WTC11 (cell line): ENCODE measurements at regions of chr12 and their contacts with region 1.

Region 1: GRCh38 chr12:47963340-47964040 is at the start of gene TMEM106C:
- DNase-seq: peak; percentile 95
- ATAC-seq: peak; percentile 93
- H3K4me3 Mint-ChIP-seq: peak within 1 kb of the TSS; percentile 94
- H3K27ac Mint-ChIP-seq: peak within 1 kb of the TSS; percentile 48; the same call in 1 of the 2 replicates
- H3K4me1 Mint-ChIP-seq: peaks cover 45% of the 10 kb centered on the region
- H3K27me3 Mint-ChIP-seq: peaks cover 56% of the 10 kb centered on the region
- CTCF ChIP-seq: peak; percentile 89
- total RNA-seq, gene TMEM106C: 48.3 to 50.8 TPM (median 49.1 TPM) in 3 replicates

Region 2: GRCh38 chr12:47904713-47905310 is 58.7 kb before region 1 on chr12 and contains the start of gene VDR:
- CTCF ChIA-PET with region 1: interaction called, 53 read pairs
- POLR2A ChIA-PET with region 1: interaction called, 8 read pairs
- DNase-seq: peak; percentile 83
- ATAC-seq: peak; percentile 86
- H3K4me3 Mint-ChIP-seq: peak within 1 kb of the TSS; percentile 73
- H3K27ac Mint-ChIP-seq: peak within 1 kb of the TSS; percentile 89
- H3K4me1 Mint-ChIP-seq: peaks cover 14% of the 10 kb centered on the region
- H3K27me3 Mint-ChIP-seq: peaks cover 92% of the 10 kb centered on the region
- CTCF ChIP-seq: no peak
- total RNA-seq, gene VDR: 0.76 to 1.3 TPM (median 0.76 TPM) in 3 replicates

Region 3: DNA sequence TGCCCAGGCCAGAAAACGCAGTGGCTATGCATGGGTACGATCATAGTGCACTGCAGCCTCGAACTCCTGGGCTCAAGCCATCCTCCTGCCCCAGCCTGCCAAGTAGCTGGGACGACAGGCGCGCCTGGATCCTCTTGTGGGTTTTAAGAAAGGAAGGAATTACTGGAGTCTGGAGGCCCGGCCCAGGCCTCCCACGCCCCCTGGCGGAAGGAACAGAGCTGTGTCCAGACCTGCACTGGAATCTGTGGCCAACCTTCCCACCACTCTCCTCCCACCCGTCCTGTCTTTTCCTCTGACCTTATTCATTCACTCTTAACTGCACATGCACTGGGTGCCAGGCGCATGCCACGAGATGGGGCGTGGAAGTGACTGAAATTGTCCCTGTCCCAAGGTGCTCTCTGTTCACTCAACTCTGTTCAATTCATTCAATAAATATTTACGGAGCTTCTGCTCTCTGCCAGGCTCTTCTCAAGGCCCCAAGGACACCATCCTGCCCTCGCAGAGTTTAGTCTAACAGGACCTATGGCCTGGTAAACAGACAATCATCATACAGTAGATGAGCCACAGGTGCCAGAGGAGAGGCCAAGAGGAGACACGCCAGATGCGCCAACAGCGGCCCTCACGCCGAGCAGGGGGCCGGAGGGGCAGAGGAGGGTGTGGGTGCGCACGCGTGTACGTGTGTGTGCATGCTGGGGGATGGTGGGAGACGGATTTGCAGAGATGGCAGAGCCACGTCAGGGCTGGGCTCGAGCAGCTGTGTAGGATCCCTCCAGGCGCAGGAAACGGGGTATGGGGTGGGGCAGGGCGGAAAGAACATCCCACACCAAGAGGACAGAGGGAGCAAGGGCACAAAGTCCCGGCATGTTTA is 13.8 kb before region 1 on chr12:
- CTCF ChIA-PET with region 1: interaction called, 43 read pairs
- POLR2A ChIA-PET with region 1: interaction called, 3 read pairs
- DNase-seq: peak; percentile 85
- ATAC-seq: peak; percentile 94
- H3K4me3 Mint-ChIP-seq: no peak overlapping the region
- H3K27ac Mint-ChIP-seq: no peak overlapping the region
- H3K4me1 Mint-ChIP-seq: peaks cover 13% of the 10 kb centered on the region
- H3K27me3 Mint-ChIP-seq: peaks cover 17% of the 10 kb centered on the region
- CTCF ChIP-seq: peak; percentile 88

Region 4: DNA sequence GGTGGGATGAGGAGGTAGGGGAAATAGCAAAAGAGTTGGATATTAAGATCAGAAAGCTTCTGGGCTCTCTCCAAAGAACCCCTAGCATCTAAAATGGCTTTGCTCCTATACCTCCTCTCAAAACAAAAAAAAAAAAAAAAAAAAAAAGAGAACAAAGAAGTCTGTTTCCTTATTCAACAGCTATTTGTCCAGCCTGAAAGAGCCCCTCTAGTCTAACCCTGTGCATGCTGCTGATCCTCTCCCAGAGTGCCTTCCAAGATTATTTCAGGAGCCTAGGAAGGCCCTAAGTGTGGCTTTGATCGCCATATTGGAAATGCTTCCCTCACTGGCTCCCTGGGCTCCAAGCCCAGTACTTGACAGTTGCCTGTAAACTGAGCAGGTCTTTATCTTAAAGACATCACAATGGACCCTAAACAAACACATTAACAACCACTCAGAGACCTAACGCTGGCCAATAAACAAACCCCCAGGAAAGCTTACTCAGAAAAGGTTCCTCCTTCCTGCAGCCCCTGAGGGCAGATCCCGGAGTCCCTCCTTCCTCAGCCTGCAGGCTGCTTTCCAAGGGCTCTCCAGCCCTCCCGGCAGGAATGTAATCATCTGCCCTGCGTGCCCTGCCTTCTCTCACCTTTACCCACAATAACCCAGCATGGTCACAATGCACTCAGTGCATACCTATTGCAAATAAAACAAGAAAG is 58.1 kb after region 1 on chr12:
- CTCF ChIA-PET with region 1: interaction called, 12 read pairs
- POLR2A ChIA-PET with region 1: no interaction called
- DNase-seq: peak; percentile 81
- ATAC-seq: peak; percentile 95
- H3K4me3 Mint-ChIP-seq: no peak overlapping the region
- H3K27ac Mint-ChIP-seq: no peak overlapping the region
- H3K4me1 Mint-ChIP-seq: peaks cover 21% of the 10 kb centered on the region
- H3K27me3 Mint-ChIP-seq: peaks cover 100% of the 10 kb centered on the region
- CTCF ChIP-seq: no peak